PC-9 (cell line): ENCODE measurements at regions of chr5 and their contacts with region 1.

Region 1: GRCh38 chr5:39730011-39730410 is 305.2 kb upstream of the DAB2 start:
- DNase-seq: peak; percentile 22 to 43
- H3K4me3 ChIP-seq: no peak overlapping the region
- H3K27ac ChIP-seq: no peak overlapping the region
- H3K4me1 ChIP-seq: no peaks in the 10 kb centered on the region
- H3K27me3 ChIP-seq: no peaks in the 10 kb centered on the region
- CTCF ChIP-seq: no peak

Region 2: DNA sequence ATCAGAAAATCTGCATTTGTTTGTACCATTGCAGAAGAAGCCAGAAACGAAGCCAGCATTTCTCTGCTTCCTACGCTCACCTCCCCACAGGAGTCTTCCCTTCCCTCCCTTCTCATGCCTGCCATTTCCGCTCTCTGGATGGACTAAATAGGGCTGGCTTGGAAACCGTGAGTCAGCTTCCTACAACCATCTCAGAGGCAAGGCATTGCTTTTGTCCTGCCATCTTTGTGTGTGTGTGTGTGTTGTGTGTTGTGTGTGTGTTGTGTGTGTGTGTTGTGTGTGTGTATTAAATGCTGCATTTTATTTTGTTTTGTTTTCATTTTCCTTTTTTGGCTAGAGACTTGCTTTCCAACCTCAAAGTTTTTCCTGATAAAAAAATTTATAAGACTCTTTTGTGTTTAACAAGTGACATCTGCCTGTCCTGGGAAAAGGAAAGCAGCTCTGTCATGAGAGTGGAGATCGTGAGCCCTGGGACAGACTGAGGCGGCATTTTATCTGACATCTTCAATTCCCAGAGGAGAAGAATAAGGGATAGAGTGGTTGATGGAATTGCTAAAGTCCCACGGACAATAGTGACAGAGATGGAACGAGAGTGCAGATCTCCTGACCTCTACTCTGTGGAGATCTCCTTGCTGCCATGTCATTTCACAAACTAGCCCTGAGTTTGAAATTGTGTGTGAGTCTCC is 1479.1 kb before region 1 on chr5:
- CTCF ChIA-PET with region 1: no interaction called
- POLR2A ChIA-PET with region 1: no interaction called
- intact Hi-C with region 1: no loop called
- DNase-seq: no peak
- H3K4me3 ChIP-seq: no peak overlapping the region
- H3K27ac ChIP-seq: no peak overlapping the region
- H3K4me1 ChIP-seq: no peaks in the 10 kb centered on the region
- H3K27me3 ChIP-seq: peaks cover 70% of the 10 kb centered on the region
- CTCF ChIP-seq: no peak

Region 3: DNA sequence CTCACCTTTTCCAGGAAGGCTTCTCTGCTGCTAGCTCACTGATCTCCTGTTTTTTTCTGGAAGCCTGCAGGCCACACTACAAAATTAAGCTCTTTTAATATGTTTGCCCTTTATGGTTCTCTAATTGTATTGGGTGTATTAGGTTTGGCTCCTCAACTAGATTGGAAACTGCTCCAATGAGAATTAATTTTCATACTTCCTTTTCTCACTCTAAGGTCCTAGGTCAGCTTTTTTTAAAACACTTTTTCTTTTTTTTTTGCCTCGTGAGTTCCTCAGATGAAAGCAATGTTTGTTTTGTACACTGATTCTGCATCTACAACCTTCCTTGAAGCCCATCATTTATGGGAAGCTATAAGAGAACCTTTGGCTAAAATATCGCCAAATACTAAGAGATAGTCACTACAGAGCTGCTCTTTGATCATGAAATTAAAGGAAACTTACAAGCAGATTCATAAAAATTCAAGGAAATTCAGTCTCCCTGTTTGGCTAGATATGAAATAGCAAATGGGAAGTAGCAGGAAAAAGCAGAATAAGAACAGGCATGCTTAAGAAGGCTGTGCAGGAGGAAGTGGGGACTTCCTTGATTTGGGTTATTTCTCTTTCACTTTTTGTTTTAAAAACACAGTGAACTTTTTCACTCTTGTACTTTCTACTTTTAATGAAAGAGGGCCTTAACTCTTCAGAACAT is 455.5 kb before region 1 on chr5:
- CTCF ChIA-PET with region 1: no interaction called
- POLR2A ChIA-PET with region 1: no interaction called
- intact Hi-C with region 1: no loop called
- DNase-seq: no peak
- H3K4me3 ChIP-seq: no peak overlapping the region
- H3K27ac ChIP-seq: no peak overlapping the region
- H3K4me1 ChIP-seq: no peaks in the 10 kb centered on the region
- H3K27me3 ChIP-seq: no peaks in the 10 kb centered on the region
- CTCF ChIP-seq: no peak

Region 4: GRCh38 chr5:40787986-40788385 is 1058.0 kb after region 1 on chr5:
- CTCF ChIA-PET with region 1: no interaction called
- POLR2A ChIA-PET with region 1: interaction called, 17 read pairs
- intact Hi-C with region 1: no loop called
- DNase-seq: no peak
- H3K4me3 ChIP-seq: no peak overlapping the region
- H3K27ac ChIP-seq: no peak overlapping the region
- H3K4me1 ChIP-seq: no peaks in the 10 kb centered on the region
- H3K27me3 ChIP-seq: no peaks in the 10 kb centered on the region
- CTCF ChIP-seq: no peak